ENCODE measurements at regions of chr4 and their contacts with region 1.

Region 1: DNA sequence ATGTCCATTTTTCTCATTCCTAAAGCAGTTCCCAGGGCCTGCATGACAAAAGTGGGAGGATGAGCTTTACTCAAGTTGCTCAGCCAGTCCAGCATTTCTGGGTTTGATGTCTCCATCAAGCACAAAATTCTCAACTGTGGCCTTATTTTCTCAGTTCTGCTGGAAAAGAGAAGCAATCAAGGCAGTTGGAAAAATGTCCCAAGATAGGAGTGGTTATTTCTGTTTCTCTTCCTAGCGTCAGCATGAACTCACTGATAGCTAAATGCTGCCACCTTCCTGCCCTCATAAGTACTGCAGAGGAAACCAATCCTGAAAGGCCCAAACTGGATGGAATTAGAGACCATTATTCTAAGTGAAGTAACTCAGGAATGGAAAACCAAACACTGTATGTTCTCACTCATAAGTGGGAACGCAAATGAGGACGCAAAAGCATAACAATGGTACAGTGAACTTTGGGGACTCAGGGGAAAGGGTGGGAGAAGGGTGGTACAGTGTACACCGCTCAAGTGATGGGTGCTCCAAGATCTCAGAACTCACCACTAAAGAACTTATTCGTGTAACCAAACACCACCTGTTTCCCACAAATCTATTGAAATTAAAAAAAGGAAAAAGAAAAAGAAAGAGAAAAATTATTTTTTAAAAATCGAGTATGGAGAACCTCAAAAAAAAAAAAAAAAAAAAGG is 29.6 kb downstream of the ADH7 start:
- DNase-seq: peak; percentile 74
- ATAC-seq: peak; percentile 67
- H3K4me3 ChIP-seq: no peak overlapping the region
- H3K27ac ChIP-seq: peak overlapping the region; percentile 92
- H3K4me1 ChIP-seq: peaks cover 44% of the 10 kb centered on the region
- H3K27me3 ChIP-seq: no peaks in the 10 kb centered on the region
- CTCF ChIP-seq: peak; percentile 94
- EP300 ChIP-seq: no peak
- POLR2A ChIP-seq: no peak
- RAD21 ChIP-seq: peak; percentile 94

Region 2: DNA sequence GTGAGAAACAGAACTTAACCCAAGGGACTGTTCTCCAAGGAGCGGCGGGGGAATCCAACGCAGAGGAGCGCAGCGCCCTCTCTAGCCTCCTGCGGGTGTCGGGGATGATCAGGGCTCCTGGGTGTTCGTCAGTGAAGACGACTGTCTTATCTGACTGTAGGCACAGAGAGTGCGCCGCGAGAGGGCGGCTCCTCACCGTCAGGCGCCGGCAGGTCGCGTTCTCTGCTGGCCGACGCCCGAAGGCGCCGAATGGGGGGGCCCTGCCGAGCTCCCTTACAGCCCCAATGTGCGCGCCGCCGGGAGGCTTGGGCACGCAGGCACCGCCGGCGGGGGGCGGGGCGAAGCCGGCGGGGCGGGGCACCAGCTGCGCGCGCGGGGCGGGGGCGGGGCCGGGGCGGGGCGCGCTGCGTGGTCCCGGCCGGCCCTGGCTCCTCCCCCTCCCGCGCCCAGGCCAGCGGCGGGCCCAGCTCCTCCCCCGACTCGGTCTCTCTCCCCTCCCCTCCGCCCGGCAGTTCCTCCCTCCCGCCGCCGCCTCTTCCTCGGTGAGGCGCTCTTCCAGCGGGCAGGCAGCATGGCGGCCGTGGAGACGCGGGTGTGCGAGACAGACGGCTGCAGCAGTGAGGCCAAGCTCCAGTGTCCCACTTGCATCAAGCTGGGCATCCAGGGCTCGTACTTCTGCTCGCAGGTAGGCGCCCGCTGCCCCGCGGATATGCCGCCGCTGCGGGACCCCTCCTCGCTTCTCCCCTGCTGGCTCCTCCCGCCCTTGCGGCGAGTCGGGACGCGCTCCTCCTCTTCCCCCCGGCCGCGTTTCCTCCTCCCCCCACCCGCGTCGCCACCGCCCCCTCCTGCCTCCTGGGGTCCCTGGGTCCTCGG is 410.2 kb before region 1 on chr4 and contains the start of gene METAP1:
- CTCF ChIA-PET with region 1: interaction called, 3 read pairs
- POLR2A ChIA-PET with region 1: interaction called, 20 read pairs
- in situ Hi-C with region 1: no loop called
- intact Hi-C with region 1: loop called (anchors 1 kb)
- DNase-seq: peak; percentile 93
- ATAC-seq: peak; percentile 91
- H3K4me3 ChIP-seq: peak within 1 kb of the TSS; percentile 86 to 98 (median 90)
- H3K27ac ChIP-seq: peak within 1 kb of the TSS; percentile 88
- H3K4me1 ChIP-seq: peaks cover 35% of the 10 kb centered on the region
- H3K27me3 ChIP-seq: no peaks in the 10 kb centered on the region; a peak in 1 of 5 replicates
- CTCF ChIP-seq: peak; percentile 93
- EP300 ChIP-seq: peak in 1 of 2 experiments; percentile 34; a peak in 1 of 4 replicates
- POLR2A ChIP-seq: peak; percentile 77 to 94
- RAD21 ChIP-seq: peak; percentile 90
- total RNA-seq, gene METAP1: 44.9 and 64.9 TPM in 2 replicates

Region 3: DNA sequence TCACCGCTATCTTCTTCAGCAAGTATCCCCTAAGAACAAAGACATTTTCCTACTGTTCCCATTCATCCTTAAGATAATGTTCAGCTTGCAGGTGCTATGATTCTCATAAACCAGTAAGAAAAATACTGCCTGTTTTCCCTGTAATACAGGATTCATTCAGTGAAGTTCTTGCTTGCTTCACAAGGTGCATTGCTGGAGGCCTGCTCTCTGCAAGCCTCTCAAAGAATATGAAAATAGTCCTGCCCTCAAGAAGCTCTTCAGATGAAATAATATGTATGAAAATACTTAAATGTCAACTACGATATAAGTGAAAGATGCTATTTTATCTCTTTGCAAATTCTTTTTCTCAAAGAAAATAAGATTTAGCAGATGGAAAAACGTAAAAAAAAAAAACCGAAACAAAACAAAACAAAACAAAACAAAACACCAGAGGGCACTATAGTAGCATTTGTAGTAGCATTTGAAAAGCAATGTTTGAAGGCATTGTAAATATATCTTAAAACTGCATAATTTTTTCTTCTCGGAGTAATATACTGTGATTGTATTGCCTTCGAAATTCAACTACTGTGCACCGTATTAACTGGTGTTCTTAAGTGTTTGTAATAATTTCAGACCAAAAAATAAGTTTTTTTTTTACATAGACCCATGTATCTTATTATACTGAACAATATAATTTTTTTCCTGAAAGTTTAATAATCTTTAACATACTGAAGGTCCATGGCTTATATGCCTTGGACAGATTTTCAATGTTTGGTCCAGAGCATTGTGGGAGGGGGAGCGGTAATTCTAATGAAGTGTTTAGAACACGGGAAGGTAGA is 287.5 kb before region 1 on chr4:
- CTCF ChIA-PET with region 1: interaction called, 40 read pairs
- POLR2A ChIA-PET with region 1: interaction called, 15 read pairs
- in situ Hi-C with region 1: loop called (anchors 5 kb)
- intact Hi-C with region 1: loop called (anchors 1 kb)
- DNase-seq: peak; percentile 7
- ATAC-seq: peak; percentile 42; the same call in 2 of the 3 replicates
- H3K4me3 ChIP-seq: no peak overlapping the region
- H3K27ac ChIP-seq: peak overlapping the region; percentile 43
- H3K4me1 ChIP-seq: peaks cover 19% of the 10 kb centered on the region
- H3K27me3 ChIP-seq: no peaks in the 10 kb centered on the region
- CTCF ChIP-seq: peak; percentile 14; the same call in 1 of the 2 replicates
- EP300 ChIP-seq: no peak
- POLR2A ChIP-seq: no peak
- RAD21 ChIP-seq: no peak

Region 4: DNA sequence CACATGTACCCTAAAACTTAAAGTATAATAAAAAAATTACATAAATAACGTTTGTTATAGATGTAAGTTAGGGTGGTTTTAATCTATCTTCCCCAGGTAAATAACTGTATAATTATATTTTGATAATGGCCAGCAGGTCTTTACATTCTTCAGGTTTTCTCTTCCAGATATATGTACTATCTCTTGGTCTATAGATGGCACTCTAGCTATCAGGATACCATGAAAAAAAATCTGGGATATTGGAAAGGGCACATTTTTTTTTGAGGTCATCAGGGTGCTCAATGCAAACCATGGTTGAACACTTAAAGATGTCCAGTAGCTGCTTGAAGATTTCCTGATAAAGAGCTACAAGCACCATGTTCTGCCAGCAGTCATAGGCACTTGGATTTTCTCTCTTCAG is 245.9 kb before region 1 on chr4:
- CTCF ChIA-PET with region 1: no interaction called
- POLR2A ChIA-PET with region 1: interaction called, 59 read pairs
- in situ Hi-C with region 1: no loop called
- intact Hi-C with region 1: loop called (anchors 1 kb)
- DNase-seq: peak; percentile 20
- ATAC-seq: no peak
- H3K4me3 ChIP-seq: no peak overlapping the region
- H3K27ac ChIP-seq: no peak overlapping the region
- H3K4me1 ChIP-seq: peaks cover 70% of the 10 kb centered on the region
- H3K27me3 ChIP-seq: no peaks in the 10 kb centered on the region
- CTCF ChIP-seq: peak; percentile 56
- EP300 ChIP-seq: no peak
- POLR2A ChIP-seq: no peak
- RAD21 ChIP-seq: peak; percentile 46; the same call in 1 of the 2 replicates

Region 5: DNA sequence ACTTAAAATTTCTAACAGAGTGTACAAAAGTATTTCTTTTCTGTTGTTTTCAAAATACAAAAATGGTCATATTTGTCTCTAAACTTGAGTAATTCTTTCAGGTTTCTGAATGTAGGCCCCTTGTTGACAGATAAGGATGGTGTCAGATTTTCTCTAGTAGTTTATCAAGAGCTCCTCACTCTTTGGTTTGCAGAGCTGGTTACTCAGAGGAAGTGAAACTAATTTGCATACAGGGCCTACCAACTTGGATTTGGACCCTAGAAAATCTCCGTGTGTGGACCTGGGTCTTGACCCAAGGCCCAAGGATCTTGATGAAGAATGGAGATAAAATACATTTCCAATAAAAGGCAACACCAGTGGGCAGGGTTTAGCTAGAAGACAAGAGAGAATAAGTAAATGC is 186.1 kb before region 1 on chr4:
- CTCF ChIA-PET with region 1: no interaction called
- POLR2A ChIA-PET with region 1: interaction called, 25 read pairs
- in situ Hi-C with region 1: no loop called
- intact Hi-C with region 1: loop called (anchors 5 kb)
- DNase-seq: peak; percentile 23
- ATAC-seq: peak; percentile 55
- H3K4me3 ChIP-seq: peak overlapping the region; percentile 26 to 81 (median 71); a peak in 5 of 6 replicates
- H3K27ac ChIP-seq: peak overlapping the region; percentile 69
- H3K4me1 ChIP-seq: peaks cover 41% of the 10 kb centered on the region
- H3K27me3 ChIP-seq: no peaks in the 10 kb centered on the region; a peak in 1 of 5 replicates
- CTCF ChIP-seq: no peak
- EP300 ChIP-seq: no peak
- POLR2A ChIP-seq: no peak
- RAD21 ChIP-seq: no peak

Region 6: DNA sequence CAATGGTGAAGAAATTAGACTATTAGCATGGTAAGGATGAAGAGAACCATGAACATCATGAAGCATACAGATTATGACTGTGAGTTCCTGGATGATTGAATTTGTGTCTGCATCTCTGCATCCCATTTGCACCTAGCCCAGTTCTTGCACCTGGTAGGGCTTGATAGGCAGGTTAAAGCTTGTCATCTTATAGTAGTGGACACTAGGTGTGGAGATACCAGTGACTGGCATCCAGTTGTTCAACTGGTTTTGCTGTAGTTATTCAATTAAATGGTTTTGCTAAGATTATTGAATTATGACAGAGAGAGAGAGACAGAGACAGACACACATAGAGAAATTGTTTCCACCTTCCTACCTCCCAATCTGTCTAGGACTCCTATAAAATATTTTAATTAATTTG is 24.5 kb after region 1 on chr4:
- CTCF ChIA-PET with region 1: no interaction called
- POLR2A ChIA-PET with region 1: no interaction called
- in situ Hi-C with region 1: no loop called
- intact Hi-C with region 1: no loop called
- DNase-seq: no peak
- ATAC-seq: no peak
- H3K4me3 ChIP-seq: no peak overlapping the region
- H3K27ac ChIP-seq: no peak overlapping the region
- H3K4me1 ChIP-seq: no peaks in the 10 kb centered on the region
- H3K27me3 ChIP-seq: peaks cover 0 to 3% of the 10 kb centered on the region in 2 experiments; a peak in 1 of 5 replicates
- CTCF ChIP-seq: no peak
- EP300 ChIP-seq: no peak
- POLR2A ChIP-seq: no peak
- RAD21 ChIP-seq: no peak

Region 7: GRCh38 chr4:99462875-99463464 is 57.4 kb after region 1 on chr4:
- CTCF ChIA-PET with region 1: interaction called, 4 read pairs
- POLR2A ChIA-PET with region 1: no interaction called
- in situ Hi-C with region 1: no loop called
- intact Hi-C with region 1: loop called (anchors 2 kb)
- DNase-seq: peak; percentile 66
- ATAC-seq: peak; percentile 96
- H3K4me3 ChIP-seq: no peak overlapping the region
- H3K27ac ChIP-seq: no peak overlapping the region
- H3K4me1 ChIP-seq: peaks cover 9% of the 10 kb centered on the region
- H3K27me3 ChIP-seq: no peaks in the 10 kb centered on the region; a peak in 1 of 5 replicates
- CTCF ChIP-seq: peak; percentile 88
- EP300 ChIP-seq: no peak
- POLR2A ChIP-seq: no peak
- RAD21 ChIP-seq: peak; percentile 86

Region 8: GRCh38 chr4:99655308-99656081 is 249.9 kb after region 1 on chr4:
- CTCF ChIA-PET with region 1: no interaction called
- POLR2A ChIA-PET with region 1: no interaction called
- in situ Hi-C with region 1: no loop called
- intact Hi-C with region 1: no loop called
- DNase-seq: no peak
- ATAC-seq: no peak
- H3K4me3 ChIP-seq: no peak overlapping the region
- H3K27ac ChIP-seq: no peak overlapping the region
- H3K4me1 ChIP-seq: no peaks in the 10 kb centered on the region
- H3K27me3 ChIP-seq: peaks cover 1 to 27% of the 10 kb centered on the region in 2 experiments; a peak in 2 of 5 replicates
- CTCF ChIP-seq: no peak
- EP300 ChIP-seq: no peak
- POLR2A ChIP-seq: no peak
- RAD21 ChIP-seq: no peak

Measured in HepG2 (cell line).